ENCODE measurements at regions of chr22 and their contacts with region 1.

Region 1: GRCh38 chr22:32796865-32797573 is 4.5 kb upstream of the TIMP3 start:
- DNase-seq: peak; percentile 76 to 86 (median 82)
- H3K4me3 ChIP-seq: no peak overlapping the region
- H3K27ac ChIP-seq: no peak overlapping the region
- H3K4me1 ChIP-seq: peaks cover 0 to 6% (median 6%) of the 10 kb centered on the region in 3 donors
- H3K27me3 ChIP-seq: no peaks in the 10 kb centered on the region
- CTCF ChIP-seq: peak; percentile 94

Region 2: DNA sequence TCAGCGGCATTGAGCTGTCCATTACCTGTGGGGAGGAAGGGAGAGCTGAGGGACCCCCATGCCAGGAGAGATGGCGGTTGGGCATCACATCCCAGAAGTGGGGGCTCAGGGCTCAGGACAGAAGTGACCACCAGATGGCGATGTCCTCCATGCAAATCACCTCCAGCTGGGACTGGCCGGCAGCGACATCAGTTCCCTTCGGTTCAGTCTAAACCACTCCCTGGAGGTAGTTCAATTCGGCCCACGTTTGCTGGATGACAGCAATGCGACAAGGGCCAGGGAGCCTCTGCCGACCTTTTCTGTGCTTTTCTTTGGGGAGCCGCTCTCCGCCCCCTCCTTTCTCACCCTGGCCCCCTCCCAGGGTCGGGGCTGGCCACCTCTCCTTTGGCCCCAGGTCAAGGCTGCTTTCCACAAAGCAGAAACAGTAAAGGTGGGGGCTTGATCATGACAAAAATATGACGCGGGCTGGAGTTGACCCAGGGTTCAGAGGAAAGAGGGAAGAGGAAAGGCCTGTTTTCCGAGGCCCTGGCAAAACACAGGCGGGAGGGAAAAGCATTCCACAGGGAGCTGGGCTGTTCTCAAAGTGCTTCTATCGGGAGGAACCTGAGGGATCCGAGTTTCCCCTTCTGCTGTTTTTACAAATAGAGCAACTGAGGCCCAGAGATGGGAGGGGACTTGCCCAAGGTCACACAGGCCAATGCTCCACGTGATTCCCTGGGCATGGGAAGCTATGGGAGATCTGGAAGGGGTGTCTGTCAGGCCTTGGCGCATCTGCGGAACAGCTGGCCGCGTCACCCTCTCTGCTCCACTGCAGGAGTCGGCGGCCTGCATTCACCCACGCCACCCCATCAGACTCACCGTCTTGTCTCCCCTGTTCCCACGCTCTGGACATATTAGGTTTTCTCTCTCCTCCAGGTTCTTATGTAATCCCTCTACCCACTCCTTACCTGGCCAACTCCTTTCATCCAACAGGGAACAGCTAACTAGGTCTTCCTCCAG is 267.7 kb before region 1 on chr22:
- intact Hi-C with region 1: loop called (anchors 5 kb)
- DNase-seq: peak; percentile 89 to 95 (median 90)
- H3K4me3 ChIP-seq: no peak overlapping the region
- H3K27ac ChIP-seq: peak overlapping the region; percentile 43 to 79
- H3K4me1 ChIP-seq: peaks cover 0 to 31% (median 23%) of the 10 kb centered on the region in 3 donors
- H3K27me3 ChIP-seq: no peaks in the 10 kb centered on the region
- CTCF ChIP-seq: peak; percentile 88

Region 3: GRCh38 chr22:32649515-32650200 is 147.4 kb before region 1 on chr22:
- intact Hi-C with region 1: loop called (anchors 10 kb)
- DNase-seq: no peak
- H3K4me3 ChIP-seq: no peak overlapping the region
- H3K27ac ChIP-seq: no peak overlapping the region
- H3K4me1 ChIP-seq: peaks cover 0 to 3% (median 1%) of the 10 kb centered on the region in 3 donors
- H3K27me3 ChIP-seq: no peaks in the 10 kb centered on the region
- CTCF ChIP-seq: no peak

Region 4: GRCh38 chr22:32991353-32992121 is 194.5 kb after region 1 on chr22:
- intact Hi-C with region 1: loop called (anchors 10 kb)
- DNase-seq: peak in 1 of 5 donors; percentile 24
- H3K4me3 ChIP-seq: no peak overlapping the region
- H3K27ac ChIP-seq: no peak overlapping the region
- H3K4me1 ChIP-seq: no peaks in the 10 kb centered on the region
- H3K27me3 ChIP-seq: no peaks in the 10 kb centered on the region
- CTCF ChIP-seq: no peak

Measured in kidney (tissue), 22 donors.